Mammary epithelial cell (primary cell): ENCODE measurements at regions of chr6 and their contacts with region 1.

Region 1: DNA sequence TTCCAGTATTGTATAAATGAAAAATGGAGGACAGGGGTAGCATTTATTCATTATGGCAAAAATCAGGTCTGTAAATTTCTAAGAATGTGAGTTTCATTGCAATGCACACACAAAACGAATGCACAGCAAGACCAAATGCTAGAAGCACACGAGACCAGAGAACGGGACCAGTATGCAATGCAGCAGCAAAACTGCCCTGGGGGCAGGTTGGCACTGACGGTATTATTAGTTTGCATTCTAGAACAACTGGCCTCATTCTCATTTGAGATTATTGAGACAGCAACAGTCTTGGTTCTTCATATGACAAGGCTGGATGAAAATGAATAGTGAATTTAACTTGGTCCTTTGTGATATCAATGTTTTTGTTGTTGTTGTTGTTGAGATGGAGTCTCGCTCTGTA is 9.0 kb upstream of the MTRES1 start:
- DNase-seq: no peak
- H3K4me3 ChIP-seq: no peak overlapping the region
- H3K27ac ChIP-seq: no peak overlapping the region
- H3K4me1 ChIP-seq: peaks cover 10% of the 10 kb centered on the region
- H3K27me3 ChIP-seq: no peaks in the 10 kb centered on the region
- CTCF ChIP-seq: no peak

Region 2: GRCh38 chr6:106637717-106638341 is 381.2 kb before region 1 on chr6:
- CTCF ChIA-PET with region 1: no interaction called
- dilution Hi-C with region 1: loop called (anchors 5 kb)
- in situ Hi-C with region 1: no loop called
- intact Hi-C with region 1: no loop called
- DNase-seq: no peak
- H3K4me3 ChIP-seq: no peak overlapping the region
- H3K27ac ChIP-seq: no peak overlapping the region
- H3K4me1 ChIP-seq: no peaks in the 10 kb centered on the region
- H3K27me3 ChIP-seq: no peaks in the 10 kb centered on the region
- CTCF ChIP-seq: no peak

Region 3: DNA sequence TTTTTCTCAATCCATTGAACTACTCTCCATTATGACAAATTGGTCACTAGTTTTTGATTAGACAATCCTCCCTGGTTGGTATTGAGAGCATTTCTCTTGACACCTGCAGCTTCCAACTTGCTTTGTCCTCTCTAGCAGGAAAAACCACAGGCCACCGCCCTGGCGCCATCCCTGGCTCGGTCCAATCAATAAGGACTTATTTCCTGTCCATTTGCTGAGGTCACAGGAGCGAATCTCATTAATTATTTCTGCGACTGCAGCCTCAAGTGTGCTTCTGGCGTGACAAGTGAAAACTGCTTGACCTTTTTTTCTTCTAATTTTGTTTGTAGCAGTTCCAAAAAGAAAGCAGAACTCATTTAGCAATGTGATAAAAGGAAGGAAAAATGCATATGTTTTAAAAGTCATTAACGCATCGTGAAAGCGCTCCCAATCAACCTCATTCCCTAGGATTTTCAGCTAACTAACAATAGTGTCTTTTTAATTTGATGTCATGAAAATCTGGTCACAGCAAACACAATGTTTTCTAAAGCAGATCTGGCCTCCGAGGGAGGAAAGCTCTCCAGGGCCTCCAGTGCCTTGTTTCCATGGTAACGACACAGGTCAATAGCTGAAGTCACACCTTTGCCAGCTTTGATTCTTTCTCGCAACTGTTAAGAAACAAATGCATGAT is 135.2 kb after region 1 on chr6:
- CTCF ChIA-PET with region 1: no interaction called
- dilution Hi-C with region 1: no loop called
- in situ Hi-C with region 1: no loop called
- intact Hi-C with region 1: no loop called
- DNase-seq: no peak
- H3K4me3 ChIP-seq: no peak overlapping the region
- H3K27ac ChIP-seq: no peak overlapping the region
- H3K4me1 ChIP-seq: no peaks in the 10 kb centered on the region
- H3K27me3 ChIP-seq: no peaks in the 10 kb centered on the region
- CTCF ChIP-seq: no peak